Activated CD8-positive, alpha-beta memory T cell treated with anti-CD3 and anti-CD28 coated beads, Interleukin-2, amount 10 ng/mL, durations not matched to agents 7 days and 5 days (primary cell): ENCODE measurements at regions of chr14 and their contacts with region 1.

Region 1: DNA sequence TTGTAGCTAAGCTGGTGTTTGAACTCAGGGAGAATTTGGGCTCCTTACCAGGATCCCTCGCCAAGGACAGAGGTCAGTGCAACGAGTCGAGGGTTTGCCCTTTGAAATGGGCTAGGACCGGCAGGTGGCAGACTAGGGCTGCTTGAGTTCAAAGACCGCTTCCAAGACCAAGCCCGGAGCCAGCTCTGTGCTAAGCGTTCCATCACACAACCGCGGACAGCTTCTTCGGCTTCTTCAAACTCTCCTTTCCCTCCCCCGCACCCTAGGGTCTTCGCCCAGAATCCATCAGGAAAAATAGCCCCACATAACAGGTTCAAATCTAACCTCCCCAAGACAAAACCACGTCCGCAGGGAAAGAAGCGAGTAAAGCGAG is 705 bp upstream of the FLVCR2 start:
- DNase-seq: peak; percentile 84
- ATAC-seq: peak; percentile 96
- H3K4me3 Mint-ChIP-seq: peak overlapping the region; percentile 78
- H3K27ac Mint-ChIP-seq: peak overlapping the region; percentile 53
- H3K4me1 Mint-ChIP-seq: peaks cover 21% of the 10 kb centered on the region
- H3K27me3 Mint-ChIP-seq: no peaks in the 10 kb centered on the region

Region 2: DNA sequence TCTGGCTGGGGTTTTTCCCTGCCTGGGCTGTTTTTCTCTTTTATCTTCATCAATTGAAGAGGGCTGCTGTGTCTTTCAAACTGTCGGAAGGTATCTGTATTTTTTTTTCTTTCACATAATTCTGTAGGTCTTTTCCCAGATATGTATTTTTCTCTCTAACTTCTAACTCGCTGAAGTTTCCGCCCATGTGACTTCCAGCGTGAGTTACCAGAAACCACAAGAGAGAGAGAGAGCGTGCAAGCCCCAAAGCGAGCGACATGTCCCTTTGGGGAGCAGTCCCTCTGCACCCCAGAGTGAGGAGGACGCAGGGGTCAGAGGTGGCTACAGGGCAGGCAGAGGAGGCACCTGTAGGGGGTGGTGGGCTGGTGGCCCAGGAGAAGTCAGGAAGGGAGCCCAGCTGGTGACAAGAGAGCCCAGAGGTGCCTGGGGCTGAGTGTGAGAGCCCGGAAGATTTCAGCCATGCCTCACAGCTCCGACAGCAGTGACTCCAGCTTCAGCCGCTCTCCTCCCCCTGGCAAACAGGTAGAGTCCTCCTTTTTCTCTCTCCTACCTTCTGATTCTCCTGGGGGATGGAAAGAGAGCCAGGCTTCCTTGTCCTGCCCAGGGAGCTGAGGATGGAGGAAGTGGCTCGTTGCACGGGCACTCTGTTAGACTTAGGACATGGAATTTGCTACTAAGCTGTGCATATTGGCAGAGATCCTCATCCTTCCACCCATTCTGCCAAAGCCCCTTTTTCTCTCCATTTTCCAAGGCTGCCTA is 55.3 kb before region 1 on chr14 and contains the start of gene BATF:
- CTCF ChIA-PET with region 1: interaction called, 13 read pairs
- DNase-seq: peak; percentile 92
- ATAC-seq: peak; percentile 71
- H3K4me3 Mint-ChIP-seq: peak within 1 kb of the TSS; percentile 99
- H3K27ac Mint-ChIP-seq: peak within 1 kb of the TSS; percentile 97
- H3K4me1 Mint-ChIP-seq: peaks cover 73% of the 10 kb centered on the region
- H3K27me3 Mint-ChIP-seq: no peaks in the 10 kb centered on the region
- total RNA-seq, gene BATF: 74.6 to 81.3 TPM

Region 3: DNA sequence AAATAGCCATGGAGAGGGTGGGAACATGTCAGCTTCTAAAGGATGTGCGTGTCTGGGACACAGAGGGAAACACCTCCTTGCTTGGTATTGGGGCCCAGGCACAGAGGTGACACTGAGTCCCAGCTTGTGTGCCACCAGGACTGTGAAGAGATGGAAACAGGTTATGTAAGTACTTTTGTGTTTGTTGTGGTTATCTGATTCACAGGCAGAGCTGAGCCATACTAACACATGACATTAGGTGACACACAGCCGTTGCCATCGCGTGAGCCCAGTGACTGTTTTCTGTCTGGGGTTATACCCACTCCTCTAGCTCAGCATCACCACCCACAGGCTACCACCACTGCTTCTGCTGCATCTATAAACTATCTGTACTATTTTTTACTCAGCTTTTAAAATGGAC is 11.4 kb before region 1 on chr14:
- CTCF ChIA-PET with region 1: interaction called, 43 read pairs
- DNase-seq: peak; percentile 87
- ATAC-seq: peak; percentile 84
- H3K4me3 Mint-ChIP-seq: peak overlapping the region; percentile 4
- H3K27ac Mint-ChIP-seq: peak overlapping the region; percentile 80
- H3K4me1 Mint-ChIP-seq: peaks cover 66% of the 10 kb centered on the region
- H3K27me3 Mint-ChIP-seq: no peaks in the 10 kb centered on the region

Region 4: DNA sequence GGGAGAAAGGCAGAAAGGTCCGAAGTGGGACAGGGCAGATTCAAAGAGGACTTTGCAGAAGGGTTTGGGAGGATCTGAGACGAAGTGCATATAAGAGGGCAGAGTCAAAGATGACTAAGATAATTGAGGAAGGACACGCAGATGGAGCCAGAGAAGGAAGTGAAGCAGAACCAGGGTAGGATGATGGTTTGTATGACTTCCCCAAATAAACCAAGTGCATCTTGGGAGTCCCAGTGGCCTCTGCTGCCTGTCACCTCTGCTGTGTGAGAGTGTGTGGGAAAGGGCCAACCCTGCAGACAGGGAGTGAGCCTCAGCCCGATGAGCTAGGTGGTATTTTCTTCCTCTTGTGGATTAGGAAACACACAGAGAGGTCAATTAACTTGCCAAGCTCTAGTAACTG is 37.5 kb after region 1 on chr14:
- CTCF ChIA-PET with region 1: no interaction called
- DNase-seq: no peak
- ATAC-seq: no peak
- H3K4me3 Mint-ChIP-seq: no peak overlapping the region
- H3K27ac Mint-ChIP-seq: no peak overlapping the region
- H3K4me1 Mint-ChIP-seq: no peaks in the 10 kb centered on the region
- H3K27me3 Mint-ChIP-seq: no peaks in the 10 kb centered on the region

Region 5: GRCh38 chr14:75654127-75654732 is 76.5 kb after region 1 on chr14:
- CTCF ChIA-PET with region 1: interaction called, 188 read pairs
- DNase-seq: peak; percentile 86
- ATAC-seq: peak; percentile 95
- H3K4me3 Mint-ChIP-seq: no peak overlapping the region
- H3K27ac Mint-ChIP-seq: no peak overlapping the region
- H3K4me1 Mint-ChIP-seq: peaks cover 13% of the 10 kb centered on the region
- H3K27me3 Mint-ChIP-seq: no peaks in the 10 kb centered on the region

Region 6: DNA sequence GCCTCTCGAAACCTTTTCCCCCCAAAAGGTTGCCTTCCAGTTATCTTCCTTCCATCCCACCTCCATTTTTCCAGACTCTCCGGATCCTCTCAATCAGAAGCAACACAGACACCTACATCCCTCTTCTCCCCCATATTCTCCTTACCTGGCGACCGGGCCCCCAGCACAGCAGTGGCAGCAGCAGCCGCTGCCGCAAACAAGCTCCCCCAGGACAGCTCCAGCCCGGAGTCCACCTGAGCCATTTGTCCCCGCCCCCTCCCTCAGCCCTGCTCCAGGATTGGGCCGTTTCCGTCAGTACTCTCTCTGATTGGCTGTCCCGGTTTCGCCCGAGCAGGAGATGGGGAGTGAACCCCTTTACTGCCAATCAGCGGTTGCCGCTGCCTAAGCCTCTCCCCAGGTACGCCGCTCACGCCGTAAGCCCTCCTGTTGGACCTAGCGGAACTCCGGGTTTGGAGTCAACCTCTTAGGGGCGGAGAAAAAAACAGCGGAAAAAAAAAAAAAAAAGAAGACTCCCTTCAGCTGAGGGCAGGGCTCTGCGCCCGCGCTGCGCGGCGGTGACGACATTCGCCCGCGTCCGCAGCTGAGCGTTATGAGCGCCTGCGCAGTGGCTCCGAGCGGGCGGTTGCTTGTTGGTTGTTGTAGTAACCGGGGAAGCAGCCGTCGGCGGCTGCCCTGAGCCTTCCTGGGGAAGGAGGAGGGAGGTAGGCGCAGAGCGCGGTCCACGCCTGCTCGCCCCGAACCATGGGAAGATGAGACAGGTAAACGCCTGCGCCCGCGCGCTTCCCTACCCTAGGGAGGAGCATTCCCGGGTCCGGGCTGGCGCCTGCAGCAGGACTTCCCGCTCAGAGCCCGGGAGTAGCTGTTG is 83.1 kb after region 1 on chr14 and contains the starts of genes ERG28 and TTLL5:
- CTCF ChIA-PET with region 1: interaction called, 188 read pairs
- DNase-seq: peak; percentile 99
- ATAC-seq: peak; percentile 98
- H3K4me3 Mint-ChIP-seq: peak within 1 kb of the TSS; percentile 98
- H3K27ac Mint-ChIP-seq: peak within 1 kb of the TSS; percentile 94
- H3K4me1 Mint-ChIP-seq: peaks cover 42% of the 10 kb centered on the region
- H3K27me3 Mint-ChIP-seq: no peaks in the 10 kb centered on the region
- total RNA-seq, gene ERG28: 22.9 to 25.1 TPM
- total RNA-seq, gene TTLL5: 28.9 to 43.4 TPM

Region 7: GRCh38 chr14:75982266-75983018 is 404.7 kb after region 1 on chr14:
- CTCF ChIA-PET with region 1: interaction called, 48 read pairs
- DNase-seq: peak; percentile 79
- ATAC-seq: peak; percentile 74
- H3K4me3 Mint-ChIP-seq: peak overlapping the region; percentile 79
- H3K27ac Mint-ChIP-seq: peak overlapping the region; percentile 78
- H3K4me1 Mint-ChIP-seq: peaks cover 42% of the 10 kb centered on the region
- H3K27me3 Mint-ChIP-seq: peaks cover 3% of the 10 kb centered on the region